ENCODE measurements at regions of chr2 and their contacts with region 1.

Region 1: GRCh38 chr2:69741619-69742466 is at the start of gene ANXA4:
- DNase-seq: peak; percentile 8 to 79 (median 55)
- ATAC-seq: peak; percentile 89
- H3K4me3 ChIP-seq: peak within 1 kb of the TSS; percentile 78 to 89
- H3K4me3 Mint-ChIP-seq: peak within 1 kb of the TSS; percentile 95
- H3K27ac ChIP-seq: peak within 1 kb of the TSS; percentile 21 to 49
- H3K27ac Mint-ChIP-seq: peak within 1 kb of the TSS; percentile 89
- H3K4me1 ChIP-seq: peaks cover 6% of the 10 kb centered on the region
- H3K4me1 Mint-ChIP-seq: peaks cover 14% of the 10 kb centered on the region
- H3K27me3 ChIP-seq: no peaks in the 10 kb centered on the region
- H3K27me3 Mint-ChIP-seq: no peaks in the 10 kb centered on the region
- CTCF ChIP-seq: no peak
- total RNA-seq, gene ANXA4: 2.9 TPM

Region 2: GRCh38 chr2:69764286-69765095 is 22.6 kb after region 1 on chr2:
- CTCF ChIA-PET with region 1: no interaction called
- POLR2A ChIA-PET with region 1: no interaction called
- intact Hi-C with region 1: no loop called
- DNase-seq: no peak
- ATAC-seq: no peak
- H3K4me3 ChIP-seq: no peak overlapping the region
- H3K4me3 Mint-ChIP-seq: no peak overlapping the region
- H3K27ac ChIP-seq: no peak overlapping the region
- H3K27ac Mint-ChIP-seq: no peak overlapping the region
- H3K4me1 ChIP-seq: no peaks in the 10 kb centered on the region
- H3K4me1 Mint-ChIP-seq: peaks cover 12% of the 10 kb centered on the region
- H3K27me3 ChIP-seq: no peaks in the 10 kb centered on the region
- H3K27me3 Mint-ChIP-seq: no peaks in the 10 kb centered on the region
- CTCF ChIP-seq: no peak

Region 3: GRCh38 chr2:69816923-69817542 is 75.2 kb after region 1 on chr2:
- CTCF ChIA-PET with region 1: interaction called, 16 read pairs
- POLR2A ChIA-PET with region 1: interaction called, 4 read pairs
- intact Hi-C with region 1: loop called in 1 of 2 experiments (anchors 5 kb)
- DNase-seq: peak; percentile 45 to 88 (median 73)
- ATAC-seq: peak; percentile 96
- H3K4me3 ChIP-seq: no peak overlapping the region
- H3K4me3 Mint-ChIP-seq: no peak overlapping the region
- H3K27ac ChIP-seq: no peak overlapping the region
- H3K27ac Mint-ChIP-seq: no peak overlapping the region
- H3K4me1 ChIP-seq: no peaks in the 10 kb centered on the region
- H3K4me1 Mint-ChIP-seq: peaks cover 3% of the 10 kb centered on the region
- H3K27me3 ChIP-seq: no peaks in the 10 kb centered on the region
- H3K27me3 Mint-ChIP-seq: no peaks in the 10 kb centered on the region
- CTCF ChIP-seq: peak; percentile 94